ENCODE measurements at regions of chr3 and their contacts with region 1.

Region 1: DNA sequence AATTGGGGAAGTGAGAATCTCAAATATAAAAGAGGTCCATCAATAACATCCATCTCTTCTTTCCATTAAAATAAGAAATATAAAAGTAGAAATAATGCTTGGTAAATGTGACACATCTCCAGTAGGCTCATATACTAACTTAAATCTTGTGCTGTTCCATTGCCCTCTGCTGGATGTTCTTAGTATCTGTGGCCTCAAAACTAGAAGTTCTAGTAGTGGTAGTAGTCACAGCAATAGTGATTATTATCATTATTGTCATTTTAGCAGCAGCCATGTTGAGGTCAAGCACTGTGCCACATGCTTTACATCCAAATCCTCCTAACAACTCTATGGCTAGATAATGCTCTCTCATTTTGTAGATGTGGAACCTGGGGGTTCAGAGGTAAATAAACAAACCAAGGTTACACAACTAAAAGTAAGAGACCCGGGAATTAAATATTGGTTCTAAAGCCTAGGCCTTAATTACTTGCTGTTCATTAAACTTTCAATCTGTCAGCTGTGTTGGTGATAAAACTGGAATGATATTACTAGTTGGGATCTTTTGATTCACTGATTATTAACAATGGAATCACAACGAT is 20.2 kb upstream of the BTLA start:
- DNase-seq: peak; percentile 56
- ATAC-seq: peak; percentile 91
- H3K4me3 ChIP-seq: no peak overlapping the region
- H3K27ac ChIP-seq: no peak overlapping the region
- H3K4me1 ChIP-seq: no peaks in the 10 kb centered on the region
- H3K27me3 ChIP-seq: no peaks in the 10 kb centered on the region
- CTCF ChIP-seq: peak; percentile 68
- EP300 ChIP-seq: no peak
- POLR2A ChIP-seq: no peak
- RAD21 ChIP-seq: no peak

Region 2: DNA sequence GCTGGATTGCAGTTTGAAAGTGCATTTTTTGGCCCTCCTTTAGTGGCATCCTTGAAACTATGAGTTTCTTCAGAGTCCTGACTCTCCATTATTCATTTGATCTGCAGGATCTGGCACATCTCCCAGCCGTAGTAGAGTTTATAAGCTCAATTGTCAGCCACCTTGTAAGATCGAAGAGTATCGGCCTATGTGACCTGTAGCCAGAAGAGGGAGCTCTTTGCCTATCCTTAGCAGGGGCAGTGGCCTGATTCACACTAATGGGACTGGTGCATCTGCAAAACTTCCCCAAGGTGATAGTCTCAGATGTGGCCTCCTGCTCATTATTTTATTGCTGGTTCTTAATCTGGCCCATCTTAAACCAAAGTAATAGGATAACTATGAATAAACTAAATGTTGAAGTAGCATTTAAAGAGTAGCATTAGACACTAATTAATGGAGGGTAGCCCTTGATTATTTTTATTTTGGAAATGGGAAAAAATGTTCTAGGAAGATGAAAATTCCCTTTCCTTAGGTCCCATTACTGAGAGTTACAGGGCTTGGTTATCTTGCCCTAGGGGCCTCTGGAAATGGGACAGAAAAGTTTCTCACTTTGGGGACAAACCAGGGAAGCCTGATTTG is 407.6 kb before region 1 on chr3:
- CTCF ChIA-PET with region 1: interaction called, 3 read pairs
- POLR2A ChIA-PET with region 1: no interaction called
- in situ Hi-C with region 1: no loop called
- intact Hi-C with region 1: loop called (anchors 1 kb)
- DNase-seq: peak; percentile 33
- ATAC-seq: peak; percentile 95
- H3K4me3 ChIP-seq: no peak overlapping the region
- H3K27ac ChIP-seq: no peak overlapping the region
- H3K4me1 ChIP-seq: peaks cover 9% of the 10 kb centered on the region
- H3K27me3 ChIP-seq: no peaks in the 10 kb centered on the region
- CTCF ChIP-seq: peak; percentile 83
- EP300 ChIP-seq: no peak
- POLR2A ChIP-seq: no peak
- RAD21 ChIP-seq: no peak

Region 3: DNA sequence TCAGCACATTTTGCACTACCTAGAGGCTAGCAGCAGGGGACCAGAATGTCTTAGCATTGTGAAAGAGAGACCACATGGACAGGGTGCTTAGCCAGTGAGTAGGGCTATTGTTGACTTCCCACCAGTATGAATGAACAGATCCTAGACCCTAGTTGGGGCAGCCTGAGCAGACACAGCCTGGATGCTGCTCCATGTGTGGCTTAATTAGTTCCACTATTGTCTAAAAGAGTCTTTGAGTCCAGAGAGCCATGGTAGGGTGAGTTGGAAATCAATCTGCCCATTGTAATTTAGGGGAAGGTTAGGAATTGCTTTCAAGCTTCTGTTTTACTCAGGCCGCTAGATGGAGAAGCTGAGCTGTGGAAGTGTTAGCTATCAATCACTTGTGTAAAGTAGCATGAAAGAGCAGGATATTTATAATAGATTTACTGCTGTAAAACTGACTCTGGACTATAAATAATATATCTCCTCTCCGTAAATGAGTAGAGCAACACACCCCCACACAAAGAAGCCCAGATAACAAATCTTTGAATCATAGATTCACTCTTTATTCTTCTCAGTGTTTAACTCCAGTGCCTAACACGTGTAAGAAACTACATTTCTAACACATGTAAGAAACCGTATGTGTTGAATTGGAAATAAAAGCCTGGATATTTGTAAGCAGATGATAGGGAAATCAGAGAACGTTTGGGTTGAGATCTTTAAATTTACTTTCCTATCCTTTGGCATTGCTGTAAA is 382.4 kb before region 1 on chr3:
- CTCF ChIA-PET with region 1: interaction called, 20 read pairs
- POLR2A ChIA-PET with region 1: no interaction called
- in situ Hi-C with region 1: loop called (anchors 10 kb)
- intact Hi-C with region 1: loop called (anchors 1 kb)
- DNase-seq: peak; percentile 42
- ATAC-seq: peak; percentile 87
- H3K4me3 ChIP-seq: no peak overlapping the region
- H3K27ac ChIP-seq: no peak overlapping the region
- H3K4me1 ChIP-seq: no peaks in the 10 kb centered on the region
- H3K27me3 ChIP-seq: no peaks in the 10 kb centered on the region; a peak in 1 of 5 replicates
- CTCF ChIP-seq: peak; percentile 70
- EP300 ChIP-seq: no peak
- POLR2A ChIP-seq: no peak
- RAD21 ChIP-seq: 0 out of 2 replicates have a peak, but pooled peaks have one; percentile 29

Region 4: DNA sequence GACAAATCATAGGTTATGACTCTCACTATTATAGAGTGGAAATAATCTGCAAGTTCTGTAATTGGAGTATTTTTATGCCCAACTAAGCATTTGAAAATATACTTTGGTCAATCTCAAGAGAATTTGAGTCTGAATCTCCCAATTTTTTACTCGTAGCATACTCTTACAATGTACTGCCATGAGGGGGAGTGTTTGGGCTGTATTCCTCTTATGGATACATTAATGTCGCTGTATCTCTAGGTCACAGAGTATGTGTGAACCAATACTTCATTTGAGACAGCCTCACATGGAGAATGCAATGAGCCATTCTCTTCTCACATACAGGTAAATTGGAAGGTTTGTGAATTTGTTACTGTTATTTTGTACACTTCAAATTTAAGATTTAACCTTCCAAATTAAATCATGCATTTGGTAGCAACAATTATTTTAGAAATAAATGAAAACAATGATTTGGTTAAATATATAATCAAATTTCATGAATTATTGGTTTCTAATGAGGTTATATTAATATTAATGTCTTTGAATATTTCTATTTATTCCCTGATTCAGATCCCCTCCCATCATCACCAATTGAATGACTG is 192.1 kb before region 1 on chr3:
- CTCF ChIA-PET with region 1: interaction called, 5 read pairs
- POLR2A ChIA-PET with region 1: no interaction called
- in situ Hi-C with region 1: no loop called
- intact Hi-C with region 1: loop called (anchors 1 kb)
- DNase-seq: peak; percentile 39
- ATAC-seq: peak; percentile 94
- H3K4me3 ChIP-seq: no peak overlapping the region
- H3K27ac ChIP-seq: no peak overlapping the region
- H3K4me1 ChIP-seq: no peaks in the 10 kb centered on the region
- H3K27me3 ChIP-seq: no peaks in the 10 kb centered on the region
- CTCF ChIP-seq: peak; percentile 41
- EP300 ChIP-seq: no peak
- POLR2A ChIP-seq: no peak
- RAD21 ChIP-seq: peak; percentile 42; the same call in 1 of the 2 replicates

Region 5: DNA sequence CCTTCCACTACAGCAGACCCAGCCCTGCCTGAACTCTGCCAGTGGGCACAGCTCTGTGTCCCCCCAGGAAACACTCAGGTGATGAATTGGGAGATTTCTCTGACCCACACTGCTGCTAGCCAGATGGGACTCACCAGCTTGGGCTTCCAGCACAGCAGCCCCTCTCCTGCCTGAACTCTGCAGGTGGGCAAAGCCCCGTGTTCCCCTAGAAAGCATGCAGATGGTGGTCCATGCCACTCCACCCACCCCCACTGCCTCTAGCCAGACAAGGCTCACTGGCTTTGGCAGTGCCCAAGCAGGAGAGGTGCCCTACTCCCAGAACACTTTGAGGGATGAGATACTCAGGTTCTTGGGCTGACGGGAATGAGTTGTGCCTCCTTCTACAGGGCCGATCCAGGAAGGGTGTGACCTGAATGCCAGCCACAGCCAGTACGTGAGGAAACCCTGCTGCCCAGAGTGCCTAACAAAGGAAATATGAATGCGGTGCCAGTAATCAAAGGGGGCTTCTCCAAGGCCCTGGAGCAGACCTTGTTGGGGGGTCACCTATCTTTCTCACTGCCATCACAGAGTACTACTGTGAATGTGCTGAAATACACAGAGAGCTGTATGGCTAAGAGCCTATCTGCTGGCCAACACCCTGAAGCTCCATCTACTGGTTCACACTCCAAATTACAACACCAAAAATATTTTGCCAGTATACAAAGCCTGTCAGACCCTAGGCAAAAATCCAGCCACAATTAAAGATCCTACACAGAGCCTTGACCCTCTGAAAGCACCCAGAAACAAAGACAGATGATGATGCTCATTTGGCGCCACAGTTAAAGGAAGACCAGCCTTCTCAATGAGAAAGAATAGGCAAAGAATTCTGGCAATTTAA is 82.1 kb before region 1 on chr3:
- CTCF ChIA-PET with region 1: no interaction called
- POLR2A ChIA-PET with region 1: no interaction called
- in situ Hi-C with region 1: no loop called
- intact Hi-C with region 1: no loop called
- DNase-seq: peak; percentile 9
- ATAC-seq: peak; percentile 80
- H3K4me3 ChIP-seq: no peak overlapping the region
- H3K27ac ChIP-seq: no peak overlapping the region
- H3K4me1 ChIP-seq: no peaks in the 10 kb centered on the region
- H3K27me3 ChIP-seq: no peaks in the 10 kb centered on the region; a peak in 1 of 5 replicates
- CTCF ChIP-seq: peak; percentile 39
- EP300 ChIP-seq: no peak
- POLR2A ChIP-seq: no peak
- RAD21 ChIP-seq: peak; percentile 15; the same call in 1 of the 2 replicates

Region 6: GRCh38 chr3:112653209-112653871 is 133.8 kb after region 1 on chr3:
- CTCF ChIA-PET with region 1: no interaction called
- POLR2A ChIA-PET with region 1: no interaction called
- in situ Hi-C with region 1: no loop called
- intact Hi-C with region 1: no loop called
- DNase-seq: no peak
- ATAC-seq: no peak
- H3K4me3 ChIP-seq: no peak overlapping the region
- H3K27ac ChIP-seq: no peak overlapping the region
- H3K4me1 ChIP-seq: no peaks in the 10 kb centered on the region
- H3K27me3 ChIP-seq: no peaks in the 10 kb centered on the region
- CTCF ChIP-seq: no peak
- EP300 ChIP-seq: no peak
- POLR2A ChIP-seq: no peak
- RAD21 ChIP-seq: no peak